Heart right ventricle (tissue), 16 donors: ENCODE measurements at regions of chr13 and their contacts with region 1.

Region 1: DNA sequence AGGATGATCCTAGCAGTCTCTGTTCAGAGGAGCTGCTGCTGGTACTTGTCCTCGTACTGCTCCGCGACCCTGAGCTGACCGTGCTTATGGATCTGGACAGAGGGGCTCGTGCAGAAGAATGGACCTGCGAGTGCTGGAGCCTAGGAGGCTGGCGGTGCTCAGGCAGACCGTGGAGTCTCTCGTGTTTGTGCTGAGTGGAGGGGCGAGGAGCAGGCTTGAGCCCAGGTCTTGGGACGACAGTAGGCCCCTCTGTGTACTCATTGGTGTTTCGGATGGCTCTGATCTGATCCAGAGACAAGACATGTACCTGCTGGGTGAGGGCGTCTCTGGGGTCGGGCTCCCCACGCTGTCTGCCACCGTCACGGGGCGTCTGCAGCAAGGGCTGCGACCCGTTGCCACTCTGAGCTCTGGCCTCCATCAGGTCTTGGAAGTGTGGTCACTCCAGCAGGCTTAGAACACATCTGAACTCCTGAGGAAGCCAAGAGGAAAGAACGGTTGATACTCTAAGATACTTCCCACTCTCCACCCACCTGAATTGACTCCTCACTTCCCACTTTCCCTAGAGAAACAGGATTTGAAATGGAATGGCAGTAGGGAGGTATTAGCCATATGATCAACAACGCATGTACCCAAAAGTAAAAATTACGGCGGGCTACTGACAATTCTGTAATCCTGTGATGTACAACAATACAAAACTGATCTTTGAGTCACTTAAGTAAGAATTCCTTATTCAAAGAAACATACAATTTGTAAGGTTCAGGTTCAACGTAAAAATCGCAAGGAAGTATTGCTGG is 3.4 kb downstream of the SPRY2 start:
- DNase-seq: no peak
- ATAC-seq: no peak
- H3K4me3 ChIP-seq: peak overlapping the region; percentile 76 to 100 (median 86)
- H3K27ac ChIP-seq: peak overlapping the region; percentile 13 to 99 (median 98)
- H3K4me1 ChIP-seq: peaks cover 0 to 46% (median 40%) of the 10 kb centered on the region in 9 donors
- H3K27me3 ChIP-seq: no peaks in the 10 kb centered on the region
- CTCF ChIP-seq: no peak

Region 2: DNA sequence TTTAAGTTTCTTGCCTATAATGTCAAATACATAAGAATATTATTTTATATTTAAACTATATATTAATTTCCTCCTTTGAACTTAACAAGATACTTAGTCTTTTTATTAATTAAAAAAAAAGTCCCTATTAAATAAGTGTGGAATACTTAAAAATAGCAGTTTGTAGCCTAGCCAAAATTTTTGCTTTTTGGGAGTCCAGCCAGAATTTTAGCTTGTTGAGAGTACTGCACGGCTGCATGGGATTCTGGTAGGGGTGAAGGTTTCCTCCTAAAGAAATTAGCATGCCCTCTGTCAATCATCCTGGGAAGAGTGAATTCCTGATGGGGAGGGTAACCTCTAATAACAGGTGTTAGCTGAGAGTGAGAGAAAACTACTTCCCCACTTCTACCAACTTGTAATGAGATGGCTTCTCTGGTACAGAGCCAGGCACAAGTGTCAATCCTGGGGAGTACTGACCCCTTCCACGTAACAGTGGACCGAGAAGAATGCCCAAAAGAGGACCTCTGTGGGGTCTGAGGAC is 192.3 kb before region 1 on chr13:
- intact Hi-C with region 1: no loop called
- DNase-seq: no peak
- ATAC-seq: peak in 1 of 8 donors; percentile 30
- H3K4me3 ChIP-seq: no peak overlapping the region
- H3K27ac ChIP-seq: peak overlapping the region in 3 of 10 donors; percentile 11 to 42 (median 15)
- H3K4me1 ChIP-seq: peaks cover 0 to 50% (median 22%) of the 10 kb centered on the region in 9 donors
- H3K27me3 ChIP-seq: no peaks in the 10 kb centered on the region
- CTCF ChIP-seq: no peak

Region 3: DNA sequence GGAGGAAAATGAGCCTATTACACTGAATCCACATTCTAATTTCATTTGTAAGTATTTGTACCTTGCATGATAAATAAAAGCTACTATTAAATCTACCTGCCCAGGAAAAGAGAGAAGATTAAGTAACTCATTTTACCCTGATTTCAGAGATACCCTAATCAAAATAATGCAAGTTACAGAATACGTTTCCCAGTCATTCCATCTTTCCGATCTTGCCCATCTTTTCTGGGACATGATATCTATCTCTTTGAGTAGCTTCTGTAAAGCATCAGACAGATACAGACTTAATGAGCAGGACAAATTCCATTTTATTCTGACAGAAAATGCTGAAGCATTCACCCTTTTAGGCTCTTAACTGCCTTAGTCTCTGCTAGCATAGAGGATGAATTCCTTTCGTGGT is 53.2 kb before region 1 on chr13:
- intact Hi-C with region 1: loop called in 1 of 10 experiments (anchors 5 kb)
- DNase-seq: no peak
- ATAC-seq: no peak
- H3K4me3 ChIP-seq: no peak overlapping the region
- H3K27ac ChIP-seq: no peak overlapping the region
- H3K4me1 ChIP-seq: no peaks in the 10 kb centered on the region
- H3K27me3 ChIP-seq: no peaks in the 10 kb centered on the region
- CTCF ChIP-seq: no peak

Region 4: DNA sequence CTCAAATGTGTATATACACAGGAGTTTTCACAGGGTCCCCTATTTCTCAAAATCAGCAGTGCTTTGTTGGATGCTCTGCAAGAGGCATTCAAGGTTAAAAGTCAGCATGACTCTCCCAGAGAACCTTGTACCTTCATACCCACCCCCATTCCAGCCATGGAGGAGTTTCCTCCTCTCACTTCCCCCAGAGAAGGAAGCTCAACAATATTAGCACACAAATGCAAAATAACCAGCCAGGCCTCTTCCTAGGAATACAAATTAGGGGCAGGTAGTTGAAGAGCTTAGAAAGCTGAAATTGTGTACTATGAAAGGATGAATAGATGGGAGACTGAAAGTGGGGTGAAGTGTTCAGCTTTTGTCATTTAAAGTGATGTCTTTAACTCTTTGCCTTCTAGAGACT is 40.4 kb before region 1 on chr13:
- intact Hi-C with region 1: no loop called
- DNase-seq: no peak
- ATAC-seq: peak in 1 of 8 donors; percentile 34
- H3K4me3 ChIP-seq: no peak overlapping the region
- H3K27ac ChIP-seq: no peak overlapping the region
- H3K4me1 ChIP-seq: peaks cover 0 to 7% (median 0%) of the 10 kb centered on the region in 9 donors
- H3K27me3 ChIP-seq: no peaks in the 10 kb centered on the region
- CTCF ChIP-seq: no peak

Region 5: GRCh38 chr13:80481588-80481987 is 144.1 kb after region 1 on chr13:
- intact Hi-C with region 1: no loop called
- DNase-seq: no peak
- ATAC-seq: no peak
- H3K4me3 ChIP-seq: no peak overlapping the region
- H3K27ac ChIP-seq: no peak overlapping the region
- H3K4me1 ChIP-seq: peaks cover 0 to 22% (median 3%) of the 10 kb centered on the region in 9 donors
- H3K27me3 ChIP-seq: no peaks in the 10 kb centered on the region
- CTCF ChIP-seq: no peak